Activated T-helper 1 cell treated with anti-CD3 and anti-CD28 coated beads, Interleukin-12 subunit alpha, Interleukin-12 subunit beta, Interleukin-2, Interleukin-4 antibody, amounts not matched to agents 30 ng/mL and 10 ng/mL and 1 ng/mL, durations not matched to agents 14 hours and 24 hours and 36 hours (primary cell): ENCODE measurements at regions of chr3 and their contacts with region 1.

Region 1: DNA sequence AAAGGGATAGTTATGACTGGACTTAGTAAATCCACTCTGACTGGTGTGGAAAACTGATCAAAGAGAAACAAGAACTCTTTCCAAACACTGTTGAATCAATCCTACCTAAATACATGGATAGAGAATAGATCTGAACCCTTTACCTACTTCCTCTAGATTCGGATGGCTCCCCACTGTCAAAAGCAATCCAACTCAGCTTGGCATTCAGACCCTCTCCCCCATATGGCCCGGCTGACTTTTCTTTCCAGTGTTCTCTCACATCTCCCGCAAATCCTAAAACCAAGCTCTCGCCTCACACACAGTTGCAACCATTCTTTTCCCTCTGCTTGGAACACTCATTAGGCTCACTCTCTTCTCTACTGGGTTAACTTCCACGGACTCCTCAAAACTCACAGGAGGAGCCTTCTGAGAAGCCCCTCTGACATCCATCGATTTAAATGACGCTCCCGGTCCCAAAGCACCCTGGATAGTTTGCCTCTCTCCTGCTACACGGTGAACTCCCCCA is 639 bp downstream of the SPICE1 start:
- DNase-seq: no peak
- H3K4me3 Mint-ChIP-seq: no peak overlapping the region
- H3K27ac Mint-ChIP-seq: no peak overlapping the region
- H3K4me1 Mint-ChIP-seq: peaks cover 7% of the 10 kb centered on the region
- H3K27me3 Mint-ChIP-seq: peaks cover 24% of the 10 kb centered on the region

Region 2: DNA sequence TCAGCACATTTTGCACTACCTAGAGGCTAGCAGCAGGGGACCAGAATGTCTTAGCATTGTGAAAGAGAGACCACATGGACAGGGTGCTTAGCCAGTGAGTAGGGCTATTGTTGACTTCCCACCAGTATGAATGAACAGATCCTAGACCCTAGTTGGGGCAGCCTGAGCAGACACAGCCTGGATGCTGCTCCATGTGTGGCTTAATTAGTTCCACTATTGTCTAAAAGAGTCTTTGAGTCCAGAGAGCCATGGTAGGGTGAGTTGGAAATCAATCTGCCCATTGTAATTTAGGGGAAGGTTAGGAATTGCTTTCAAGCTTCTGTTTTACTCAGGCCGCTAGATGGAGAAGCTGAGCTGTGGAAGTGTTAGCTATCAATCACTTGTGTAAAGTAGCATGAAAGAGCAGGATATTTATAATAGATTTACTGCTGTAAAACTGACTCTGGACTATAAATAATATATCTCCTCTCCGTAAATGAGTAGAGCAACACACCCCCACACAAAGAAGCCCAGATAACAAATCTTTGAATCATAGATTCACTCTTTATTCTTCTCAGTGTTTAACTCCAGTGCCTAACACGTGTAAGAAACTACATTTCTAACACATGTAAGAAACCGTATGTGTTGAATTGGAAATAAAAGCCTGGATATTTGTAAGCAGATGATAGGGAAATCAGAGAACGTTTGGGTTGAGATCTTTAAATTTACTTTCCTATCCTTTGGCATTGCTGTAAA is 1377.2 kb before region 1 on chr3:
- intact Hi-C with region 1: loop called (anchors 10 kb)
- DNase-seq: no peak
- H3K4me3 Mint-ChIP-seq: no peak overlapping the region
- H3K27ac Mint-ChIP-seq: peak overlapping the region; percentile 6
- H3K4me1 Mint-ChIP-seq: peaks cover 54% of the 10 kb centered on the region
- H3K27me3 Mint-ChIP-seq: no peaks in the 10 kb centered on the region

Region 3: DNA sequence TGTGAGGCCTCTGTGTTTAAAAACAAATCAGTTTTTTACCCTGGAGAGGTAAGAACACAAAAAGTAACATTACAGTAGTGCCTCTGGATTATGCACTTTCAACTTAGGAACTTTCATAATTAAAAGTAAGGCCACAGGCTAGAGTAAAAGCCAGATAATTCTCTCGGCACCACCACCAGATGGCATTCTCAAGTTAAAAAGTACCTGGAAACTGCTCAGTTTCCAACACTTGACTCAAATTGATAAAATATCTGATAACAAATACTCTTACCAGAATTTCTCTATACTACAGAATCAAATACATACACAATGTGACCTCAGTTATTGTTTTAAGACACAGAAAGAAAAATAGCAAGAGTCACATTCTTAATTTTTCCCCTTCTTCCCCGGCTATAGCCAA is 19.3 kb before region 1 on chr3:
- intact Hi-C with region 1: loop called (anchors 1 kb)
- DNase-seq: no peak
- H3K4me3 Mint-ChIP-seq: no peak overlapping the region
- H3K27ac Mint-ChIP-seq: no peak overlapping the region
- H3K4me1 Mint-ChIP-seq: no peaks in the 10 kb centered on the region
- H3K27me3 Mint-ChIP-seq: no peaks in the 10 kb centered on the region

Region 4: GRCh38 chr3:113546414-113546893 is 32.1 kb after region 1 on chr3:
- intact Hi-C with region 1: loop called (anchors 5 kb)
- DNase-seq: no peak
- H3K4me3 Mint-ChIP-seq: peak overlapping the region; percentile 23
- H3K27ac Mint-ChIP-seq: peak overlapping the region; percentile 32
- H3K4me1 Mint-ChIP-seq: peaks cover 15% of the 10 kb centered on the region
- H3K27me3 Mint-ChIP-seq: no peaks in the 10 kb centered on the region

Region 5: GRCh38 chr3:113947372-113948014 is 433.2 kb after region 1 on chr3 and contains the start of gene ZDHHC23:
- intact Hi-C with region 1: loop called (anchors 5 kb)
- DNase-seq: peak; percentile 66
- H3K4me3 Mint-ChIP-seq: peak within 1 kb of the TSS; percentile 85
- H3K27ac Mint-ChIP-seq: peak within 1 kb of the TSS; percentile 79
- H3K4me1 Mint-ChIP-seq: no peaks in the 10 kb centered on the region
- H3K27me3 Mint-ChIP-seq: peaks cover 41% of the 10 kb centered on the region
- total RNA-seq, gene ZDHHC23: 0.88 and 1.8 TPM in 2 replicates